Adrenal gland (tissue), 19 donors: ENCODE measurements at regions of chr11 and their contacts with region 1.

Region 1: GRCh38 chr11:86802601-86803051 is 2.3 kb downstream of the PRSS23 start:
- DNase-seq: peak in 3 of 7 donors; percentile 38 to 66 (median 47)
- H3K4me3 ChIP-seq: peak overlapping the region in 1 of 4 donors; percentile 17
- H3K27ac ChIP-seq: no peak overlapping the region
- H3K4me1 ChIP-seq: peaks cover 6 to 20% of the 10 kb centered on the region in 2 donors
- H3K27me3 ChIP-seq: no peaks in the 10 kb centered on the region
- CTCF ChIP-seq: peak; percentile 30 to 71 (median 59)
- POLR2A ChIP-seq: no peak

Region 2: GRCh38 chr11:86632499-86633269 is 169.9 kb before region 1 on chr11:
- intact Hi-C with region 1: loop called in 1 of 2 experiments (anchors 10 kb)
- DNase-seq: peak; percentile 73 to 91 (median 85)
- H3K4me3 ChIP-seq: no peak overlapping the region
- H3K27ac ChIP-seq: peak overlapping the region in 3 of 5 donors; percentile 47 to 79 (median 52)
- H3K4me1 ChIP-seq: peaks cover 4 to 22% of the 10 kb centered on the region in 2 donors
- H3K27me3 ChIP-seq: no peaks in the 10 kb centered on the region
- CTCF ChIP-seq: peak in 5 of 6 experiments; percentile 31 to 49 (median 43)
- POLR2A ChIP-seq: no peak

Region 3: GRCh38 chr11:86671682-86672621 is 130.7 kb before region 1 on chr11 and contains the start of gene ME3:
- intact Hi-C with region 1: loop called (anchors 5 to 10 kb)
- DNase-seq: peak; percentile 73 to 86 (median 79)
- H3K4me3 ChIP-seq: peak within 1 kb of the TSS; percentile 1 to 95 (median 82)
- H3K27ac ChIP-seq: peak within 1 kb of the TSS in 4 of 5 donors; percentile 79 to 95 (median 93)
- H3K4me1 ChIP-seq: peaks cover 13 to 28% of the 10 kb centered on the region in 2 donors
- H3K27me3 ChIP-seq: no peaks in the 10 kb centered on the region
- CTCF ChIP-seq: peak in 1 of 6 experiments; percentile 8
- POLR2A ChIP-seq: peak in 1 of 2 donors; percentile 41
- total RNA-seq, gene ME3: 18.6 to 64.4 (median 43.3) TPM